Left colon (tissue), 2 donors: ENCODE measurements at regions of chr22 and their contacts with region 1.

Region 1: DNA sequence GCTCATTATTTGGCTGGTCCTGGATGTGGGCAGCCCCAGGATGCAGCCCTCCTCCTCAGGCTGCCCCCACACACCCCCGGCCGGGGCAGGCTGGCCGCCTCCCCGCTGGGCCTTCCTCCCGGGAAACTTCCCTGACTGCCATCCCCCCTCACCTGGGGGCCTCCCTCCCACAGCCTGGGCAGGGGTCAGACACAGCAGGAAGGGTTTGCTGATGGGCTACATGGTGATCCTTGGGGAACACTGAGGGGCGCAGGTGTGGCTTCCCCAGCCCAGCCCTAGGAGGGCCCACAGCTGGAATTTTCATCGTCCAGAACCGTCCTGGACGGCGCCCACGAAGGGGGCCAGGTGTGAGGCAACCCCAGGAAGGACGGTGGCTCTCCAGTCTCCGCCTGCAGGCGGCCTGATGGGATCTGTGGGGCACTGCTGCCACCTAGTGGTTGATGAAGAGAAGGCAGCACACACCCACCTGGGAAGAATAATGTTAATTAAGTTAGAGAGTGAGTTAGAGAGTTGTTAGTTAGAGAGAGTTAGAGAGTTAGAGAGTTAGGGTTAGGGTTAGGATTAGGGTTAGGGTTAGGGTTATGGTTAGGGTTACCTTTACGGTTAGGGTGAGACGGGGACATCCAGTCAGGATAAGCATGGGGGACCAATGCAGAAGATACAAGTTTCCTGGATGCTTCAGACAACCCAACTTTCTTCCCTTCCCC is 75.9 kb upstream of the PRR5 start:
- DNase-seq: peak; percentile 43 to 71
- ATAC-seq: peak; percentile 87

Region 2: DNA sequence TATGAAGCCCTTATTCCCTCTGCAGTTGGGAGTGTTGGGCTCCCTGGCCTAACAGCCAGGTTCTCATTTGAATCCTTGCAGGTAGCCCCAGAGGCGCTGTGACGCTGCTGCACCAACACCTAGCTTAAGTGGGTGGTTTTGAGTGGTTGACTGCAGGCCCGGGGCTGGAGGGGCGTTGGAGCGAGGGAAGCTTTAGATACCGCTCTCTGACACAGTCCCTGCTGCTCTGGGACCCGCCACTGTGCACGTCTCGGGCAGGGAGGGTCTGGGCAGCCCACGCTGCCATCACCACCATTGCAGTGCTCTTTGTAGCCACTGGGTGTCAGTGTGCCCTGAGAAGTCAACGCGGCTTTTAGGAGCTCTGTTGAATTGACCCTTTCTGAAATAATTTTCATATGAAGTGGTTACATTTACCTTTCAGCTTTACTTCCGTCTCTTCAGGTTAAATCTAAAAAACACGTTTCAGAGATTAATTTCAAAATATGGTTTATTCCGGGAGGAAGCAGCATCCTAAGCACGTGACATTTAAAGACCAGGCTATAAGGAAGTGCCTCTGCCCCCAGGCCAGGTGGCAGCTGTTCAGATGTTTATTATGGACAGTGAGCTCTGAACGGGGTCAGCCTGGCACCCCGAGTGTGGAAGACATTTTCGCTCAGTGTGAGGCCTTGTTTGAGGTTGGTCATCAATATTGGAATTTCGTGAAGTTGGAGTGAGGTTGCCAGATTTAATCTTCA is 632.9 kb before region 1 on chr22:
- intact Hi-C with region 1: loop called (anchors 5 to 10 kb)
- DNase-seq: peak in 1 of 2 donors; percentile 50
- ATAC-seq: peak; percentile 87

Region 3: GRCh38 chr22:44080936-44081861 is 544.9 kb before region 1 on chr22:
- intact Hi-C with region 1: loop called (anchors 10 kb)
- DNase-seq: peak; percentile 58 to 90
- ATAC-seq: peak; percentile 53

Region 4: DNA sequence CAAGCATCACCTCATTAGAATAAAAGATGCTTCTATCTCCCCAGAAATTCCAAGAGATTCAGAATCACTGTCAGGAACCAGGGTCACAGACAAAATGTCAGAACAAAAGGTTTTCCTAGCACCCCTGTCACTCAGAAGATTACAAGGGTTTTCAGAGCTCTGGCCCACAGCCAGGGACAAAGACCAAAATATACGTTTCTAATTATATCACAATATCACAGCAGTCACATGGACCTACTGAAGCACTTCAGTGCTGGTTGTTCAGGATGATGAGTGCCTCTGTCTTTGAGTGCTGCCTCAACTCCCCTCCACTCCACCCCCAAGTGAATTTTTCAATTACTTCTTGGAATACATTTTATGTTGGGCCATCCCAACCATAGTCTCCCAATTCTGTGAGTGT is 106.2 kb before region 1 on chr22:
- intact Hi-C with region 1: no loop called
- DNase-seq: no peak
- ATAC-seq: no peak